Activated naive CD4-positive, alpha-beta T cell treated with anti-CD3 and anti-CD28 coated beads, Interleukin-2, amount 10 ng/mL, durations not matched to agents 7 days and 5 days (primary cell): ENCODE measurements at regions of chr17 and their contacts with region 1.

Region 1: DNA sequence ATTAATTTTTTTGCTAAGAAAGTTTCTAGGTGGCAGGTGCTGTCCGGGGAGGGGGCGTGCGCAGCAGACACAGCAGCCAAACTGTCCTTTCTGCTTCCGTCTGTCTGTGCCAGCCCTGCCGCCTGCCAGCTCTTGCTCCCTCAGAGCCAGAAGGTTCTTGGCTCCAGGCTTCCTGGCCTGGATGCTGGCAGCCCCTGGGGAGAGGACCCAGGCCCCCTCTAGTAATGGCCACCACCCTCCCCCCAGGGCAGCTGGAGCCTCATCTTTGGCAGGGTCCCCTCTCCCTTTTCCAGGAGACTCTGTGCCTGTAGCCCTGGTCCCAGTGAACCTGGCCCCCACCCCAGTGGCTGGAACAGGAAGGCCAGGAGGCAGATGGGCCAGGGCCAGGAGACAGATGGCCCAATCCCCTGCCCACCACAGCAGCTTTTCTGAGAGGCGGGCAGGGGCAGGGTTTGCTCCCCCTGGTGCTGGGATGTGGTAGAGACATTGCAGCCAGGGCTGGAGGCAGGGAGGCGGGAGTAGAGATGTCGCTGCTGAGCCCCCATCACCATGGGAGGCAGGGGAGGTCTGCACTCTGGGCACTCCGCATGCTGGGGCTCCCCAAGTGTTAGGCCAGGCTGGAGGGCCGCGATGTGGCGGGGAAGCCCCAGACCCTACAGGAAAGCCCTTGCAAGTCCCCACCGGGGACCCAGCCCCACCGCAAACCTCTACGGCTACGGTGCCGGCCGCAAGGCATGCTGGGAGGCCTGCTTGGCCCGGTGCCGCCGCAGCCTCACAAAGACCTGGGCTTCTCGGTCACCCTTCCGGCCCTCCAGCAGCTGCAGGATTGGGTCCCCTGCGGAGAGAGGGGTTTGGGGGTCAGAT is 16.7 kb downstream of the UNC13D start:
- DNase-seq: peak; percentile 77
- H3K4me3 Mint-ChIP-seq: peak overlapping the region; percentile 18
- H3K27ac Mint-ChIP-seq: peak overlapping the region; percentile 90
- H3K4me1 Mint-ChIP-seq: peaks cover 29% of the 10 kb centered on the region
- H3K27me3 Mint-ChIP-seq: no peaks in the 10 kb centered on the region

Region 2: DNA sequence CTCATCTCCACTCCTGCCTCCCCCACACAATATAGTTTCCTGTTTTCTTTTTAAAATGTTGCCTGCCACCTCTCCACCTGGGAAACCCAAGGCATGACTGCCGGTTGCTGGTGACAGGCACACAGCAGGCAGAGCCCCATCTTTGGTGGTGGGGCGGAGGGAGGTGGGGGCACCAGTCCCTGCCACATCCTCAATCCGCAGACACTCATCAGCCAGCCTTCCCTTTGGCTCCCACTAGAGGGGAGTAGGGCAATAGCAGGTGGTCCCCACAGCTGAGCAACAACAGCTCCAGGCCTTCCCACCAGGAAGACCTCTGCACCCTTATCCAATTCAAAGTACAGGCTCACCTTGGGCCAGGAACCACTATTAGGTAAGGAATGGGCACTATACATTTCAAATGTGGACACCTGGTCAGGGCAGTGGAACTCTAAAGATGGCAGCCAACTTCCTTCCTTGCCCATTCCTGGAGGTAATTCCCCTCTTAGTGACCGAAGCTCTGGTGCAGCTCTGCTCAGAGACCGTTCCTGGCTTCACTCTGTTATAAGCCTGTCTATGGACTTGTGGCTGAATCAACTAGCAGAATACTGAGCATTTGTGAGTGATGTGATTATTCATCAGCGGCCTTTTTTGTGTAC is 174.5 kb before region 1 on chr17:
- CTCF ChIA-PET with region 1: no interaction called
- DNase-seq: peak; percentile 47
- H3K4me3 Mint-ChIP-seq: no peak overlapping the region
- H3K27ac Mint-ChIP-seq: no peak overlapping the region
- H3K4me1 Mint-ChIP-seq: peaks cover 5% of the 10 kb centered on the region
- H3K27me3 Mint-ChIP-seq: no peaks in the 10 kb centered on the region

Region 3: DNA sequence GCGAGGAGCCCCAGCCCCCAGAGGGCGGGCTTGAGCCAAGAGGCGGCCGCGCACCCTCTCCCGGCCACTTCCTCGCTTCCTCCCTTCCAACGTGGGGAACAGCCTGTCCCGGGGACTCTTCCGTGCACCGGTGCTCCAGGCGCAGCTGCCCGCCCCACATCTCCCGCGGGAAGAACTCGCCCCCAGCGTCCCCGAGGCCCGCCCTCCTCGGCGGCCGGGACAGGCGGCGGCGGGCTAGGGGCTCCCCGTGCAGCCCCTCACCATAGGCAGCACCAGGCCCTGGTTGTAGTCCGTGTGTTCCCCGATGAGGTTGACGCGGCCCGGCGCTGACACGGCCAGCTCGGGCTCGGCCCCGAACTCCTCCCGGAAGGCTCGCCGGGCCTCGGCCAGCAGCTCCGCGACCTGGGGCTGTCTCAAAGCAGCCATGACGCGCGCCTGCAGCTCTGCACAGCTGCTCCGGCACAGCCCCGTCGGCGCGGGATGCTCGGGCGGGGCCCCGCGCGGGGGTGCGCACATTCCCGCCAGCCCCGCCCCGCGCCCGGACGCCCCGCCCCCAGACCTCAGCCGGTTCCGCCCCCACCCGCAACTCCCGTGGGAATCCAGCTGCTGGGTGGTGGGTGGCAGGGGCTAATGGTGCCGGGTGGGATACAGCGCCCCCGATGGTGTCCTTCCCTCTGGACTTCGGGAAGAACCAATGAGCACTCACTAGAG is 62.6 kb before region 1 on chr17 and contains the start of gene GALK1:
- CTCF ChIA-PET with region 1: interaction called, 59 read pairs
- DNase-seq: peak; percentile 82
- H3K4me3 Mint-ChIP-seq: peak within 1 kb of the TSS; percentile 78
- H3K27ac Mint-ChIP-seq: peak within 1 kb of the TSS; percentile 76
- H3K4me1 Mint-ChIP-seq: peaks cover 17% of the 10 kb centered on the region
- H3K27me3 Mint-ChIP-seq: peaks cover 16% of the 10 kb centered on the region

Region 4: GRCh38 chr17:75785016-75785890 is 42.2 kb before region 1 on chr17:
- CTCF ChIA-PET with region 1: interaction called, 14 read pairs
- DNase-seq: peak; percentile 93
- H3K4me3 Mint-ChIP-seq: peak overlapping the region; percentile 86
- H3K27ac Mint-ChIP-seq: peak overlapping the region; percentile 100
- H3K4me1 Mint-ChIP-seq: peaks cover 55% of the 10 kb centered on the region
- H3K27me3 Mint-ChIP-seq: no peaks in the 10 kb centered on the region

Region 5: DNA sequence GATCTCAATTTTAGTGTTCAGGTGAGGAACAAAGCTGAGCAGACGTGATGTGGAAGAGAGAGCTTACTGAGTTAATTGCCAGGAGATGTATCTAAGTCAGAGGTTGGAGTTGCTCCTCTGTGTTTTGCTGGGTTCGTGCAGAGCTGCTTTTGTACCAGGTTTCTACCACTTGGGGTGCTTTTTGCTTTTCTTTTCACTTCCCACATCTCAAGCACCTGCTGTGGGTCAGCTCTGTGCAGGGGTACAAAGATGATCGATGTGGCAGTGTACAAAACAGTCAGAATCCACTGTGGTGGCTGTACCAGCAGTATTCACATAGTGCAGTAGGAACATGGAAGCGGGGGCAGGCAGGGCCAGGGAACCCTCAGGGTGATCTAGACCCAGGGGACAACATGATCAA is 28.1 kb before region 1 on chr17:
- CTCF ChIA-PET with region 1: interaction called, 11 read pairs
- DNase-seq: no peak
- H3K4me3 Mint-ChIP-seq: no peak overlapping the region
- H3K27ac Mint-ChIP-seq: no peak overlapping the region
- H3K4me1 Mint-ChIP-seq: peaks cover 10% of the 10 kb centered on the region
- H3K27me3 Mint-ChIP-seq: no peaks in the 10 kb centered on the region

Region 6: DNA sequence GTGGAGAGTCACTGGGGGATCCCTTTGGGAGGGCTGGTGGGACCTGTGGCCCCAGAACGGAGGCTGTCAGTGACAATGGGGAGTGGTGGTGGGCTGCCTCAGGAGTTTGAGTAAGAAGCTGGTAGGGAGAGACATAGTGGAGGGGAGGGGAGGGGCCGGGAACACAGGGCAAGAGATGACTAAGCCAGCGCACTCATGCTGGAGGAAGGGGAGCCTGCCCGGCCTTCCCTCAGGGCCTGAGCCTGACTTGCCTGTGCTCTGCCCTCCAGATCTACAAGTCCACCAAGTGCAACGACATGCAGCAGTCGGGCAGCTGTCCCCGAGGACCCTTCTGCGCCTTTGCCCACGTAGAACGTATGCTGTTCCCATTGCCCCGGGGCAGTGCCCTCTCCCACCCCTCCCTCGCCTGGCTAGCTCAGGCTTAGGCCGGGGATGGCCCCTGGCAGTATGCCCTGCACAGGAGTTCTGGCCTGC is 12.5 kb before region 1 on chr17:
- CTCF ChIA-PET with region 1: interaction called, 11 read pairs
- DNase-seq: no peak
- H3K4me3 Mint-ChIP-seq: no peak overlapping the region
- H3K27ac Mint-ChIP-seq: no peak overlapping the region
- H3K4me1 Mint-ChIP-seq: peaks cover 3% of the 10 kb centered on the region
- H3K27me3 Mint-ChIP-seq: no peaks in the 10 kb centered on the region

Region 7: GRCh38 chr17:75845049-75845860 is 17.8 kb after region 1 on chr17:
- CTCF ChIA-PET with region 1: interaction called, 55 read pairs
- DNase-seq: peak; percentile 76
- H3K4me3 Mint-ChIP-seq: peak overlapping the region; percentile 52
- H3K27ac Mint-ChIP-seq: peak overlapping the region; percentile 97
- H3K4me1 Mint-ChIP-seq: peaks cover 31% of the 10 kb centered on the region
- H3K27me3 Mint-ChIP-seq: no peaks in the 10 kb centered on the region